Lower leg skin (tissue), 4 donors: ENCODE measurements at regions of chr1 and their contacts with region 1.

Region 1: DNA sequence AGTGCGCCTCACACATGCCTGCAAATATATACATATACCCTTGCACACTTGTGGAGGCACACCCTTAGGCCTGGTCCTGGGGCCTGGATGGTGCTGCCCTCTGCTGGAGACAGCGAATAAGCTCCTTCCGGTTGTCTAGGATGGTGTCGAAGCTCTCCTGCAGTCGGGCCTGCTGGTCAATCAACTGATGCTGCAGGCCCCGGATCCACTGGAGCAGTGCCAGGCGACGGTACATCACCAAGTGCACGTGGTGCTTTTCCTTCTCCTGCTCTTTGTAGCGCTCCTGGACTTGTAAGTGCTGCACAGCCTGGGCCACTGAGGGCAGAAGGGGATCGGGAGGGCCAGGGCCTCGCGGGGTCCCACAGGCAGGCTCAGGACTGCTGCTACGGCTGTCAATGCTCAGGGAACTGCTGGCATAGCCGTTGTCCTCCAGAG is 3.1 kb downstream of the C1orf216 start:
- DNase-seq: peak; percentile 30 to 91
- H3K4me3 ChIP-seq: no peak overlapping the region
- CTCF ChIP-seq: no peak
- POLR2A ChIP-seq: no peak

Region 2: GRCh38 chr1:35573198-35574090 is 142.1 kb before region 1 on chr1 and contains the start of gene TFAP2E:
- intact Hi-C with region 1: loop called (anchors 5 kb)
- DNase-seq: peak in 1 of 2 donors; percentile 89
- H3K4me3 ChIP-seq: peak within 1 kb of the TSS; percentile 47
- CTCF ChIP-seq: no peak
- POLR2A ChIP-seq: no peak
- total RNA-seq, gene TFAP2E: 4.2 to 5.7 (median 4.8) TPM

Region 3: DNA sequence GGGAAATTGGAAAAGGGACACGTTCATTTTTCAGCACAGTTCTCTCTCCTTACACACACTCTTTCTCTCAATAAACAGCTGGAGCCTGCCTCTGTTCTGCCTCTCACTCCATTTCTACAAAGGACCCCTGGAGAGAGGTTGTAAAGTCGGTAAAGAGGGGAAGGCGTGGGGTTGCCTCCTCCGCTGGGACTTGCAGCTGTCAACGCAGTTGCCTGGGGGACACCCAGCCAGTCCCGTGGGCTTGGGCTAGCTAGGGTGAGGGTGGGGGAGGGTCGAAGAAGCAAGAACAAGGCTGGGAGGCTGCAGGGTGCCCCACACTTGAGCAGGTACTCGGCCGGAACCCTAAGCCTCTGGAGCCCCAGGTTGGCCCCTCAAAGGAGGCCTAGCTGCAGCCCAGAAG is 24.5 kb before region 1 on chr1:
- intact Hi-C with region 1: no loop called
- DNase-seq: no peak
- H3K4me3 ChIP-seq: no peak overlapping the region
- CTCF ChIP-seq: no peak
- POLR2A ChIP-seq: no peak